ENCODE measurements at regions of chr7 and their contacts with region 1.

Region 1: DNA sequence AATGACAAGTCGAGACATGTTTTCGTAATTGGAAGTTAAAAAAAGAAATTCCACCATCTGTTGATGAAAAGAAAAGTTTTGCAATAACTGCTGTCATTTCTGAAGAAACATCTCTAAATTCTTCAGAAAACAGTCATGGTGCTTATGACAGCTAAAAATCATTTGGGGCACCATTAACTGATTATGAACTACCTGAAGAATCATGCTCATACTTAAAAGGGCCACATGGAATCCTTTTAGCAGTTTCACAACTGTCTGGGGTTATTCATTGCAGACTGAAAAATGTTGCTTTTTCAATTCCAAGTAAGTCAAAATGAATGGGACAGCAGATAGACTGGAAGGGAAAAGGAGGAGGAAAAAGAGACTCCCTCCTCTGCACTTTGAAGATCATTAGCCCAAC is 134.2 kb downstream of the CHN2 start:
- DNase-seq: no peak
- H3K4me3 ChIP-seq: no peak overlapping the region
- H3K4me3 Mint-ChIP-seq: no peak overlapping the region
- H3K27ac Mint-ChIP-seq: no peak overlapping the region
- H3K4me1 ChIP-seq: peaks cover 27% of the 10 kb centered on the region
- H3K4me1 Mint-ChIP-seq: peaks cover 27% of the 10 kb centered on the region
- H3K27me3 ChIP-seq: no peaks in the 10 kb centered on the region
- H3K27me3 Mint-ChIP-seq: no peaks in the 10 kb centered on the region
- CTCF ChIP-seq: no peak

Region 2: GRCh38 chr7:29375641-29376562 is 47.1 kb after region 1 on chr7:
- CTCF ChIA-PET with region 1: no interaction called
- POLR2A ChIA-PET with region 1: no interaction called
- intact Hi-C with region 1: loop called (anchors 2 kb)
- DNase-seq: peak; percentile 80 to 90
- H3K4me3 ChIP-seq: 0 out of 2 replicates have a peak overlapping the region, but pooled peaks have one; percentile 9
- H3K4me3 Mint-ChIP-seq: peak overlapping the region; percentile 42
- H3K27ac Mint-ChIP-seq: peak overlapping the region; percentile 93
- H3K4me1 ChIP-seq: peaks cover 27% of the 10 kb centered on the region
- H3K4me1 Mint-ChIP-seq: peaks cover 31% of the 10 kb centered on the region
- H3K27me3 ChIP-seq: no peaks in the 10 kb centered on the region
- H3K27me3 Mint-ChIP-seq: no peaks in the 10 kb centered on the region
- CTCF ChIP-seq: no peak

Measured in Caco-2 (cell line).